Activated T-helper 1 cell treated with anti-CD3 and anti-CD28 coated beads, Interleukin-12 subunit alpha, Interleukin-12 subunit beta, Interleukin-2, Interleukin-4 antibody, amounts not matched to agents 30 ng/mL and 10 ng/mL and 1 ng/mL, durations not matched to agents 14 hours and 24 hours and 36 hours (primary cell): ENCODE measurements at regions of chr14 and their contacts with region 1.

Region 1: DNA sequence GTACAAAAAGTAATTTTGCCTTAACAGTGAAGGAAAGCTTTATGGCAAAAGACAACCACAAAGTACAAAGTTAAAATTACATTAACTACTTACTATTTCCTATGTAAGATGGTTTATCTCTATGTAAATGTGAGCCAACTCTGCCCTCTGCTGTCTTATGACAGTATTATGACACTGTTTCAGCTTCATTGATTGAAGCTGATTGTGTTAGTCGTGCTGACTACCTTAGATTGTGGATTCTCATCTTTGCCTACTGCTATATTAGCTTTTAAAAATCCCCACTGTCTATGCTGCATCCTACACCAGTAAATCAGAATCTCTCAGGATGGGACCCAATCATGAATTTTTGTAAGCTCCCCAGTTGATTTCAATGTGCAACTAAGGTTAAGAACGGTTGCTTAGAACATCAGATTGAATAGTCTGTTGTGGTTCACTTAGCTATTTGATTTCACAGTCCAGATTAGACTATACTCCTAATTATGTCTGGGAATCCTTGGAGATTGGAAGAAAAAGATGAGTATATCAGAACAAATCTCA is 12.2 kb upstream of the SPTB start:
- DNase-seq: peak; percentile 24
- H3K4me3 Mint-ChIP-seq: no peak overlapping the region
- H3K27ac Mint-ChIP-seq: no peak overlapping the region
- H3K4me1 Mint-ChIP-seq: no peaks in the 10 kb centered on the region
- H3K27me3 Mint-ChIP-seq: peaks cover 42% of the 10 kb centered on the region

Region 2: GRCh38 chr14:64387694-64388532 is 504.0 kb before region 1 on chr14 and contains the start of gene MTHFD1:
- intact Hi-C with region 1: no loop called
- DNase-seq: peak; percentile 96
- H3K4me3 Mint-ChIP-seq: peak within 1 kb of the TSS; percentile 97
- H3K27ac Mint-ChIP-seq: peak within 1 kb of the TSS; percentile 90
- H3K4me1 Mint-ChIP-seq: peaks cover 29% of the 10 kb centered on the region
- H3K27me3 Mint-ChIP-seq: no peaks in the 10 kb centered on the region
- total RNA-seq, gene MTHFD1: 241 and 244 TPM in 2 replicates

Region 3: DNA sequence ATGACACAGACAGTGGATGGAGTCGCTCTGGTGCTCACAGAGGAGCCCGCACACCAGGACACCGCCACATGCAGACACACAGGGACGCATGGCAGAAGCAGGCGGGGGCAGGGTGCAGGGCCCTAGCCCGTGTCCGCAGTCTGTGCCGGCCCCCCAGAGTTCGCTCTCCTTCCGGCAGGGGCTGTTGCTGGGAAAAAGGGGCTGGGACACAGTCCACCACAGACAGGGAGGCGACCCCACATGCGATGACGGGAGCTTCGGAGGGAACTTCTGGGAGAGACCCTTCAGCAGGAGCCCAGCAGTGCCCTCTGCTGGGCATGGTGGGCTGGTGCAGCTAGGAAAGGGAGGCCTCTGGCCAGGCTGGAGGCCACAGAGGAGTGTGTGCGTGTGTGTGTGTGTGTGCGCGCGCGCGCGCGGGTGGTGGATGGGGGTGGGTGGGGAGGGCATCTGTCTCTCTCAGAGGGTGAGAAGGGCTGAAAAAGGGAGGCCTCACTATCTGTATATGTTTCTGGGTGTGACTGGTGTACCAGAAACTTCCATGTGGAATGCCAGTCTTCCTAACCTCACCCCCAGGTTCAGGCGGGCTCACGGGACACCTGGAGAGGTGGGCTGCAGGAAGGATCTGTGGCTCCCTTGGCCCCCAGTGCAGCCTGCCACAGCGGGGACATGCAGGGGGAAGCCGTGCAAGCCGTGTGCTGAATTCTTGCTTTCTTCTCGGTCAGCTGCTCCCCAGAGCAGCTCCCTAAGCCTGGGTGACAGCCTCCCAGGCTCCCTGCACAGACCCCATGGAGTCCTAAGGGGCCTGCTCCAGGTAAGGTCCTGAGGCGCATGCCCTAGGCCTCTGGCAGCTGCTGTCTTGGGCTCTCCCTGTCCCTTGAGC is 127.0 kb before region 1 on chr14:
- intact Hi-C with region 1: loop called (anchors 5 kb)
- DNase-seq: peak; percentile 56
- H3K4me3 Mint-ChIP-seq: peak overlapping the region; percentile 27
- H3K27ac Mint-ChIP-seq: no peak overlapping the region
- H3K4me1 Mint-ChIP-seq: peaks cover 52% of the 10 kb centered on the region
- H3K27me3 Mint-ChIP-seq: peaks cover 13% of the 10 kb centered on the region

Region 4: GRCh38 chr14:64823305-64823861 is 68.5 kb before region 1 on chr14:
- intact Hi-C with region 1: loop called (anchors 5 kb)
- DNase-seq: peak; percentile 48
- H3K4me3 Mint-ChIP-seq: peak overlapping the region; percentile 23
- H3K27ac Mint-ChIP-seq: no peak overlapping the region
- H3K4me1 Mint-ChIP-seq: peaks cover 6% of the 10 kb centered on the region
- H3K27me3 Mint-ChIP-seq: peaks cover 30% of the 10 kb centered on the region